Right ventricle myocardium inferior (tissue), 1 donor: ENCODE measurements at regions of chr2 and their contacts with region 1.

Region 1: GRCh38 chr2:218186355-218186766 is 19.6 kb upstream of the CXCR1 start:
- DNase-seq: peak; percentile 71
- ATAC-seq: peak; percentile 84

Region 2: DNA sequence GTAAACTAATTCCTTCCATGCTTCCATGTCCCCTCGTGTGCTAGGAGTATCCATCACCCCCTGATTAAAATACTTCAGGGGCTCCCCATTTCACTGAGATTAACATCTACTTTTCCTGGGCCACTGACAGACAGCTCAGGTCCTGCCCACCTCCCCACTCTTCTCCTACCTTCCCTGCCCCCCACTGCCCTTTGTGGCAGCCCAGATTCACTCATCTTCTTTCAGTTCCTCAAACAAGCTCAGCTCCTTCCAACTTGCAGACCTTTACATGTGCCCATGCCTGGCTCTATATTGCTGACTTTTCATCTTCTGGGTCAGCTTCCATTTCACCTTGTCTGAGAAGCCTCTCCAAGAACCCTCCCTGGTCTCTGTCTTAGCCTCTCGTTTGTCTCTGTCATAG is 105.3 kb before region 1 on chr2:
- intact Hi-C with region 1: no loop called
- DNase-seq: no peak
- ATAC-seq: no peak

Region 3: DNA sequence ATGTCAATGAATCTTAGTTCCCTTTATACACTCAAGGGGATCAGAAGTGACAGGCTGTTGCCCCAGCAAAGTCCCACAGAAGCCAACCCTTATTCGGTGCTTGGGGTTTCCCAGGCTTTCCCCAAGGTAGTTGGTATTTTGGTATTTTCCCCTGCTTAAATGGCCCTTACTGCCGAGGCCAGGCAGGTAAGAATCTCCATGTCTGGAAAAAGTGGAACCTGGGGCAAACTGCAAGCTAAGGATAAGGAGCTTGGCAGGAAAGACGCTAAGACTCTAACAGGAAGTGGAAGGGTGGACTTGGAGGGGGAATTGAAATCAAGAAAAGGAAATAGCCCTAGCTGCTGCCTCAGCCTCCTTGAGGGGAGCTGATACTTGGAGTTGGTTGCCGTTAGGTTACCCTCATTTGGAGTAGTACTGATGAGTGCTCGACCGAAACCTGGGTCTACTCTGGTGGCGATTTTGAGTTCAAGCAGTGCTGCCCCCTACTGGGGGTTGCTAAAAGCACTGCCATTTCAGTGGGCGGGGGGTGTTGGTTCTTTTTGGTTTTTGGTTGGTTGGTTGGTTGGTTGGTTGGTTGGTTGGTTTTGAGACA is 71.1 kb after region 1 on chr2:
- intact Hi-C with region 1: loop called (anchors 5 kb)
- DNase-seq: no peak
- ATAC-seq: no peak

Region 4: DNA sequence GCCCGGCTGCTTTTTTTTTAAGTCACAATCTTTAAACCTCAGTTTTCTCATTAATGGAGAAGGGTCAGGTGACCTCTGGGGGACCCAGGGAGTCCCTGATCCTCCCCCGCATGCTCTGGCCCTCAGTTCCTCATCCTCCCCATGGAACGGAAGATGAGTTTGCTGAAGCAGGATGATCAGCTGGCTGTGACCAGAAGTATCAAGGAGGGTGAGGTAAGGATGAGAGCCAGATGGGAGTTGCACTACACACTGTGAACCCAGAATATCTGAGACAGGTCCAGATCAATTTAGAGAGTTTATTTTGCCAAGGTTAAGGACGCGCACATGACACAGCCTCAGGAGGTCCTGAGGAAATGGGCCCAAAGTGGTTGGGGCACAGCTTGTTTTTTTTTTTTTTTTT is 174.1 kb after region 1 on chr2:
- intact Hi-C with region 1: loop called (anchors 10 kb)
- DNase-seq: no peak
- ATAC-seq: peak; percentile 27

Region 5: DNA sequence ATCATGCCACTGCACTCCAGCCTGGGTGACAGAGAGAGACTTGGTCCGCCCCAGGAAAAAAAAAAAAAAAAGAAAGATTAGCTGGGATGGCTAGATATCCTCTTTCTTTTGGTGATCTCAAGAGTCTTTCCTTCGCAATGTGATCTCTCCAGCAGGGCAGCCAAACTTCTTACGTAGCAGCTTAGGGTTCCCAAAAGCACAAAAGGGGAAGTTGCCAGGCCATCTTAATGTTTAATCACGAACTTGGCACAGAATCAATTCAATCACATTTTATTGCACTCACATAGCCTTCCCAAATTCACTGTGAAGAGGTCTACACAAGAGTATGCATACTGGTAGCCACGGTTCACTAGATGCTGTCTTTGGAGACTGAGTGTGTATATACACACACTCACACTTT is 285.6 kb after region 1 on chr2:
- intact Hi-C with region 1: loop called (anchors 10 kb)
- DNase-seq: no peak
- ATAC-seq: peak; percentile 23